ENCODE measurements at regions of chr17 and their contacts with region 1.

Region 1: DNA sequence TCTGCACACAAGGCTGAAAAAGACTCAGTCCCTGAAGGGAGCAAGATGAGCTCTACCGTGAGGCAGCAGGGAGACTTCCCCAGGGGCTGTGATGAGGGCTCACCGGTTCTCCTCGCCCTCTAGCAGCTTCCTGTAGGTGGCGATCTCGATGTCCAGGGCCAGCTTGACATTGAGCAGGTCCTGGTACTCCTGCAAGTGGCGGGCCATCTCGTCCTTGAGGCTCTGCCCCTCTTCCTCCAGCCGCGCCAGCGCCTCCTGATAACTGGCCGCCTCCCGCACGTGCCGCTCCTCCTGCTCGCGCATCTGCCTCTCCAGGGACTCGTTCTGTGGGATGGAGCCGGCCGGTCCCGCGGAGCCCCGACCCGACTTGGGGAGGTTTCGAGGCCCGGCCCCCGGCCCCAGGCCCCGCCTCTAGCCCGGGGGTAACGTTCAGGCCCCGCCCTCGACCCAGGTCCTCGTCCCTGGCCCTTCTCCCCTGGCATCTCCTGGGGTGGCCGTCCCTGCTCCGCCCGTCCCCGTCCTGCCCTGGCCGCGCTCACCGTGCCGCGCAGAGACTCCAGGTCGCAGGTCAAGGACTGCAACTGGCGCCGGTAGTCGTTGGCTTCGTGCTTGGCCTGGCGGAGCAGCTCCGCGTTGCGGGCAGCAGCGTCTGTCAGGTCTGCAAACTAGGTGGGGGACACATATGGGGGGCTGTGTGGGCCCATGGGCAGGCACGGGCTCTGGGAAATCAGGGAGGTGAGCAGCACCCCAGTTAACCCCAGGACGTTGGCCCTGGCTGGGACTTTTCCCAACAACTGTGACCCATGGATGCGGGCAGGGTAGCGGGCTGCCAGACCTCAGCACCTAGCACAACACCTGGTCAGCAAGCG is 3.9 kb downstream of the GFAP start:
- DNase-seq: peak; percentile 71

Region 2: DNA sequence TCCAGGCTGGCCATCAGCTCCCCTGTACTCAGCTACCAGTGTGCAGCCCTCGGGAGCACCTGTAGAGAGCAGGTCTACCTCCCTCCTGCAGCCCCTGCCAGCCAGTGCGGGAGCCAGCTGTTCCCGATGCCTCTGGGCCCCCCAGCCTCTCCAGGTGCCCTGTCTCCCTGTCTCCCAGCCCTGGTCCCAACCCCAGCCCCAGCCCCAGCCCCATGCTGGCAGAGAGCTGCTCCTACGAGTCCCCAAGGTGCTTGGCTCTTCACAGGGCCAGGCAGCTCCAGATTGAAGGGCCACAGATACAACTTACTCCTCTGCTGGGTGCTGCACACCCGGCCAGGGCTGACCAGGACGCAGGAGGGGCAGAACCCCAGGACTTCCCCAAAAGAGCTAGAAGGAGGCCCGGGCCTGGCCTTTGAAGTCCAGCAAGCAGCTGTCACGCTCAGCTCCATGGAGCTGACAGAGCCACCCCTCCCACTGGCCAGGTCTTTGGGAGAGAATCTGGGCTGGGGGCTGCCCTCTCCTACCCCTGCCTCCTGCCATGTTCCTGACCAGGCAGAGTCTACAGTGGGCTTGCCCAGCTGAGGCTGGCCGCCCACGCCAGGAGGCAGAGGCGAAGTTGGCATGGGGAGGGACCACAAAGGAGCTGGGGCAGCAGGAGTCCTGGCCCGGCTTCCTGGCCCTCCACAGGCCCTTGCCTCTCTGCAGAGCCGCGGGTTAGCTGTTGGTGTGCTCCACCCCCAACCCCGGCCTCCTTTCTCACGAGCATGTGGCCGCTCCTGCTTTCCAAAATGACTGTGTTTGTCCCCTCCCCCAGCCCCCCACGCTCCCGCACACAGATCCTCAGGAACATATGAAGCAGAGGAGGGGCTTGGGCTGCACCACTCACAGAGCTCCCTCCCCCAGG is 162.0 kb before region 1 on chr17:
- CTCF ChIA-PET with region 1: no interaction called
- POLR2A ChIA-PET with region 1: no interaction called
- DNase-seq: no peak

Region 3: GRCh38 chr17:44899069-44899782 is 12.1 kb before region 1 on chr17 and contains the start of gene EFTUD2:
- CTCF ChIA-PET with region 1: interaction called, 16 read pairs
- POLR2A ChIA-PET with region 1: interaction called, 37 read pairs
- DNase-seq: peak; percentile 94

Measured in HEK293T (cell line).